CD8-positive, alpha-beta T cell (primary cell): ENCODE measurements at regions of chr17 and their contacts with region 1.

Region 1: DNA sequence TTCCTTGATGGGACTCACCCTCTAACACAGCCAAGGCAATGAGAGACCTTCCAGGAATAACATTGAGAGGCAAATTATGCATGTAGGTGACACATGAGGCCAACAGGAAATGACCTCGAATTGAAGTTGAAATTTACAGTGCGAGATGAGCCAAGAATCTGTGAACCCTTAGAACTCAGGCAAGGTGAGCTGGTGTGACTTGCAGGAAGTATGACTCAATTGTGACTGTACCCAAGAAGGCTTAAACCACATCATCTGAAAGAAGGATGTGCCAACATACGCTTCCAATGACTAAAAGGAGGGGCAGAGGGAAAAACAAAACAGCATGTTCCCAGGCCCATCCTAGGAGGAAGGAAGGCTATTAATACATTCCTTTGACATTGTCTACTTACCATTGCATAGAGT is 44.8 kb downstream of the PITPNC1 start:
- DNase-seq: peak in 7 of 9 experiments; percentile 53 to 95 (median 69)
- ATAC-seq: peak; percentile 87
- H3K4me3 ChIP-seq: no peak overlapping the region
- H3K4me3 Mint-ChIP-seq: peak overlapping the region; percentile 35
- H3K27ac ChIP-seq: peak overlapping the region; percentile 50 to 96
- H3K27ac Mint-ChIP-seq: peak overlapping the region; percentile 96
- H3K4me1 ChIP-seq: peaks cover 70% of the 10 kb centered on the region
- H3K4me1 Mint-ChIP-seq: peaks cover 90% of the 10 kb centered on the region
- H3K27me3 ChIP-seq: no peaks in the 10 kb centered on the region
- H3K27me3 Mint-ChIP-seq: no peaks in the 10 kb centered on the region
- CTCF ChIP-seq: no peak

Region 2: GRCh38 chr17:67390646-67391384 is 31.1 kb before region 1 on chr17:
- CTCF ChIA-PET with region 1: interaction called, 12 read pairs
- POLR2A ChIA-PET with region 1: interaction called, 4 read pairs
- intact Hi-C with region 1: no loop called
- DNase-seq: peak; percentile 21 to 84 (median 67)
- ATAC-seq: peak; percentile 74
- H3K4me3 ChIP-seq: peak overlapping the region; percentile 7 to 30
- H3K4me3 Mint-ChIP-seq: peak overlapping the region; percentile 59
- H3K27ac ChIP-seq: peak overlapping the region; percentile 62 to 74
- H3K27ac Mint-ChIP-seq: peak overlapping the region; percentile 91
- H3K4me1 ChIP-seq: peaks cover 67% of the 10 kb centered on the region
- H3K4me1 Mint-ChIP-seq: peaks cover 86% of the 10 kb centered on the region
- H3K27me3 ChIP-seq: no peaks in the 10 kb centered on the region
- H3K27me3 Mint-ChIP-seq: no peaks in the 10 kb centered on the region
- CTCF ChIP-seq: no peak

Region 3: GRCh38 chr17:67400193-67400592 is 21.7 kb before region 1 on chr17:
- CTCF ChIA-PET with region 1: interaction called, 4 read pairs
- POLR2A ChIA-PET with region 1: interaction called, 4 read pairs
- intact Hi-C with region 1: loop called (anchors 1 to 2 kb)
- DNase-seq: peak in 2 of 9 experiments; percentile 55 to 81
- ATAC-seq: peak; percentile 24
- H3K4me3 ChIP-seq: peak overlapping the region in 1 of 2 experiments; percentile 8
- H3K4me3 Mint-ChIP-seq: peak overlapping the region; percentile 71
- H3K27ac ChIP-seq: peak overlapping the region; percentile 39 to 78
- H3K27ac Mint-ChIP-seq: peak overlapping the region; percentile 92
- H3K4me1 ChIP-seq: peaks cover 76% of the 10 kb centered on the region
- H3K4me1 Mint-ChIP-seq: peaks cover 82% of the 10 kb centered on the region
- H3K27me3 ChIP-seq: no peaks in the 10 kb centered on the region
- H3K27me3 Mint-ChIP-seq: no peaks in the 10 kb centered on the region
- CTCF ChIP-seq: no peak

Region 4: GRCh38 chr17:67452681-67453554 is 31.0 kb after region 1 on chr17:
- CTCF ChIA-PET with region 1: interaction called, 3 read pairs
- POLR2A ChIA-PET with region 1: interaction called, 10 read pairs
- intact Hi-C with region 1: no loop called
- DNase-seq: peak in 4 of 9 experiments; percentile 50 to 89 (median 66)
- ATAC-seq: peak; percentile 79
- H3K4me3 ChIP-seq: peak overlapping the region in 1 of 2 experiments; percentile 15
- H3K4me3 Mint-ChIP-seq: peak overlapping the region; percentile 77
- H3K27ac ChIP-seq: peak overlapping the region; percentile 59 to 72
- H3K27ac Mint-ChIP-seq: peak overlapping the region; percentile 97
- H3K4me1 ChIP-seq: peaks cover 91% of the 10 kb centered on the region
- H3K4me1 Mint-ChIP-seq: peaks cover 93% of the 10 kb centered on the region
- H3K27me3 ChIP-seq: no peaks in the 10 kb centered on the region
- H3K27me3 Mint-ChIP-seq: no peaks in the 10 kb centered on the region
- CTCF ChIP-seq: no peak